Posterior vena cava (tissue), 2 donors: ENCODE measurements at regions of chr20 and their contacts with region 1.

Region 1: GRCh38 chr20:4158466-4159050 is 143.2 kb upstream of the RNF24 start:
- DNase-seq: peak; percentile 44

Region 2: DNA sequence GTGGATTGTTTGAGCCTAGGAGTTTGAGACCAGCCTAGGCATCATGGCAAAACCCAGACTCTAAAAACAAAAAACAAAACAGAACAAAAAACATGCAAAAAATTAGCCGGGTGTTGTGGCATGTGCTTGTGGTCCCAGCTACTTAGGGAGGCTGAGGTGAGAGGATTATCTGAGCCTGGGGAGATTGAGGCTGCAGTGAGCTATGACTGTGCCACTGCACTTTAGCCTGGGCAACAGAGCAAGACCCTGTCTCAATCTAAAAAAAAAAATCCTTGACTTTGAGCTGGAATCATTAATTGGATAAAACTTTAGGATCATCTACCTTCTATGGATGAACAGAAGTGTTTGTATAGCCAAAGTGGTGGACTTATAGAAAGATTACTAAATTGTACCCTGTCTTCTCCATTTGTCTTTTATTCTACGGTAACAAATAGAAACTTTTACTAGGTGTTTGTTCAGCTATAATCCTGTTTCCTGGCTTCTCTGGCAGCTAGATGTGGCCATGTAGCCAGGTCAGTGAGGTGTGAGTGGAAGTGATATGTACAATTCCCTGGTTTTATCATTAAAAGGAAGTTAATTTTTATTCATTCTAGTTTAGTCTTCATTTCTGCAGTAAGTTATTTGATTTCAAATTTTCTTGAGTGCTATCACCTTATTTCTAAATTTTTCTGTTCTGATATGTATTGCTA is 34.9 kb before region 1 on chr20:
- intact Hi-C with region 1: loop called in 1 of 2 experiments (anchors 1 kb)
- DNase-seq: no peak

Region 3: DNA sequence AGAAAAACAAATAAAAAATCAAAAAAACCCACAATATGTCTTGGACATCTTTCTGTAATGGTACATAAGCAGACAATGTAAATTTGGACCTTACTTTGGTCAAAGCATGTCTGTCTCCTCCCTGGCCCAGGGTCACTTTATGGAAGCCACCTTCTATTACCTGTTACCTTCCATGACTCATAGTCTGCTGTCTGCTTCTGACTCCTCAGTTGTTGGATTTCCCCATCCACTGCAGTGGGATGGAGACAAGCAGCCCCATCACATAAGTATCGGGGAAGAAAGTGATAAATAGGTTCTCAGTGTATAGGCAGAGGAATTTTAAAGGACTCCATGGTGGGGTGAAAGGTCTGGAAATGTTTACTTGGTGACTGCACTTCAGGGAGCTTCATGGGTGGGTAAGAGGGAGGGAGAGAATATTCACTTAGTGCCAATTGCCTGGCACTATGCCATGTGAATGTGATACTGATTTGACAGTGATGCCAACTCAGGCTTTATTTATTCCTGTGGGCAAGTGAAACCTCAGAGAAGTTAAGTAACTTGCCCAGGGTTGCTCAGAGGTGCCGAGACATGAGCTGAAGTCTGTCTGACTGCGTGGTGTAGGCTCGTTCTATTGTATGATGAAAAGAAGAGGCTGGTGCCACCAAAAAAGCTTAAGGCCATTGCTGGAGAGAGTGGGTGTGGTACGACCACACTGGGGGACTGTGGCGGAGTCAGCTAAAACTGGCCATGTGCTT is 32.4 kb after region 1 on chr20:
- intact Hi-C with region 1: loop called in 1 of 2 experiments (anchors 1 kb)
- DNase-seq: peak; percentile 16